Activated naive CD4-positive, alpha-beta T cell treated with anti-CD3 and anti-CD28 coated beads for 36 hours (primary cell): ENCODE measurements at regions of chr5 and their contacts with region 1.

Region 1: DNA sequence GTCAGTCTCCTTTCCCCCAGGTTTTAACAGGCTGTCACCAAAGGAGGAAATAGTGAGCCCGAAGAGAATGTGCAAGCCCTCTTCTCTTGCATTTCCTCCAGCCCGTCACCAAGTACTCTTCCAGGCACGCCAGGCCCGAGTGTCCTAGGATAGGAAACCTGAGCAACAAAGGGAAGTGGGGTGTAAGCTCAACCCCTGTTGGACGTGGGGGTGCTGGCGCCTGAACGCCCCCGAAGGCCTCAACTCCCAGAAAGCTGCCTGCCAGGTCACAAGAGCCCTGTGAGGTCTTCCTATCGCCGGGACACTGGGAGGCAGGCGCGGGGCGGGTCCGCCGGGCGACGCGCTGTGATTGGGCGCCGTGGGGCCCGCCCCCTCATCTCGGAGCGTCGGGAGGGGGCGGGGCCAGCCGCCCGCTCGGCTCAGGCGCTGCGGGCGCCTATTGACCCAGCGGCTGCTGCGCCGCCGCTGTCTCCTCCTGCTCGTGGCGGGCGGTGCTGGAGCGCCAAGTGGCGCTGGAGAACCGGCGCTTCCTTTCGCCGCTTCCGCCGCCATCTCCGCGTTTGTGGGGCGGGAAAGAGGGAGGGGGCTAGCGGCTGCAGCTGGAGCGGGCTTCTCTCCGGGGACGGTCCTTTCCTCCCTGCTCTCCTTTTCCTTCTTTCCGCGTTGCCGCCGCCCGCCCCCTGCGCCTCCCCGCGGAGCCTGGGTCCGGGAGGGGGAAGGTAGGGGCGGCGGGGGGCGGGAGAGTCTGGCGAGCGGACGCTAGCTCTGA is 572 bp upstream of the MAN2A1 start:
- DNase-seq: peak; percentile 81
- H3K4me3 Mint-ChIP-seq: peak overlapping the region; percentile 89
- H3K27ac Mint-ChIP-seq: peak overlapping the region; percentile 92
- H3K4me1 Mint-ChIP-seq: peaks cover 31% of the 10 kb centered on the region
- H3K27me3 Mint-ChIP-seq: no peaks in the 10 kb centered on the region

Region 2: DNA sequence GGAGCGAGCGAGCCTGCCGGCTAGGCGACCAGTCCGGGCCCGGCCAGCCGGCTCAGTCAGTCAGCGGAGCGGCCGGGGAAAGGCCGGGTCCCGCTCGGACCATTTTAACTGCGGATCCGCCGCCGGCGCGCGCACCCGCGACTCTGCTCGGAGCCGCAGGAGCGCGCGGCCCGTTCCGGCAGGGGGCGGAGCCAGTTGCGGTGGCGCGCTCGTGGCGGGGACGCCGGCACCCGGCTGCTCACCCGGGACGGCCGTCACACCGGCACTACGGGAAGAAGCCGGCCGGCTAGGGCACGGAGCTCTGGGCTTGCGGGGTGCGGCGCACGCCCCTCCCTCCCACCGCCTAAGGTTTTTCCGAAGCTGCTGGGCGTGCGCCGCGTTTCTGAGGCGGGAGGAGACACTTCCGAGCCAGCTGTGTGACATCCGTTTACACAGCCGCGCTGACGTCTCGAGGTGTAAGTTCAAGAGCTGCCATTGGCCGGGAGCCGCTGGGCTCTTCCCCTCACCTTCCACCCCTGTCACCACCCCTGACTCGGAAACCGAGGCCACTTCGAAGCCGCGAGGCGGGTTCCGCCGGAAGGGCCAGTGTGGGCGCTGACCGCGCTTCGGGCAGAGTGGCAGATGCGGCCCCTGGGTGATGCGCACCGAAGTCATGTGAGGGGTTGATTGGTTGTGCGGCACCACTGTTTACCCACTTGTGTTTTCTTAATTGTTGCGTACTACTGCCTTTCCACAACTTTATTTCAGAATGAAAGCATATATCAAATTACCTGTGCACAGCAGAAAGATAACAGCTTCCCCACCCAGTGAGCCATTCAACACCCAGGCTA is 1307.0 kb before region 1 on chr5 and contains the start of gene FBXL17:
- CTCF ChIA-PET with region 1: no interaction called
- intact Hi-C with region 1: loop called (anchors 2 kb)
- DNase-seq: peak; percentile 95
- H3K4me3 Mint-ChIP-seq: peak within 1 kb of the TSS; percentile 82
- H3K27ac Mint-ChIP-seq: peak within 1 kb of the TSS; percentile 95
- H3K4me1 Mint-ChIP-seq: peaks cover 36% of the 10 kb centered on the region
- H3K27me3 Mint-ChIP-seq: no peaks in the 10 kb centered on the region
- total RNA-seq, gene FBXL17: 3.5 to 4.3 TPM

Region 3: DNA sequence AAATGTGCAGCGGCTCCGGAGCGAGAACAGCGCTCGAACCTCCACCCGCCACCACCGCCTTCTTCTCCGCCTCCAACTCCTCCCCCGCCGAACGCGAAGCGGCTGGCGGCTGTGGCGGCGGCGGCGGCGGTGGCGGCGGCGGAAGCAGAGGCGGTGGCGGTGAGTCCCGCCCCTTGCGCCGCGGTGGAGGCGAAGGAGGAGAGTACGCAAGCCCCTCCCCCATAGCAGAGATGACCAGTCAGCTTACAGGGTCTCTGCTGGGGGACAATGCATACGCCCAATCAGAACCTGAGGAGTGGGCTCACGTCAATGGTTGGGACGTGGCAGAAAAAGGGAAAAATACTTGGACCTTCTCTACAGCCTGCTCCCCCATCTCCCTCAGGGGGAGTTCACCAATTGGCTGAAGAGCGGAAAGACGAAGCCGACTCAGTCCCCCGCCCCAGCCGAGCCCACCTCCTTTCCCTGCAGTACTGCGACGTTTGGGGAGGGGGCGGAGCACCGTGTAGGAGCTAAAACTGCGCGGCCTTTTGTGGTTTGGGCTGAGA is 279.2 kb before region 1 on chr5 and contains the start of gene PJA2:
- CTCF ChIA-PET with region 1: interaction called, 3 read pairs
- intact Hi-C with region 1: loop called (anchors 1 kb)
- DNase-seq: peak; percentile 99
- H3K4me3 Mint-ChIP-seq: peak within 1 kb of the TSS; percentile 97
- H3K27ac Mint-ChIP-seq: peak within 1 kb of the TSS; percentile 100
- H3K4me1 Mint-ChIP-seq: peaks cover 46% of the 10 kb centered on the region
- H3K27me3 Mint-ChIP-seq: no peaks in the 10 kb centered on the region
- total RNA-seq, gene PJA2: 53.1 to 56.9 TPM

Region 4: DNA sequence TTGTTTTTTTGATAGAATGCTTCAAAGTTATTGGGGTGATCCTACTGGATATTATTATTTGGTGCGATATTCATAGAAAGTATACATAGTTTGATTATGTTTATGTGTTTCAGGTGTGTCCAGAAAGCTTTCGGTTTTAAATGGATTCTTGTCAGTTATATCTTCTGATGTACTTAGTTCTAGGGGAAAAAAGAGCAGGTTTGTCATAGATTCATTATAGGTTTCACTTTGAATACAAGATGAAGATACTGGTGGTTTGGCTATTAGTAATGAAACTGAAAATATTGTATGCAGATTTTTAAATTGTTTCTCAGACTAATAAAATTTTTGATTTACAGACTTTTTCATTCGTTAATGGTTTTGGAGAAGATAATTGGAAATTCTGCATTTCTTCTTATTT is 99.4 kb after region 1 on chr5:
- CTCF ChIA-PET with region 1: interaction called, 3 read pairs
- intact Hi-C with region 1: loop called (anchors 2 kb)
- DNase-seq: no peak
- H3K4me3 Mint-ChIP-seq: no peak overlapping the region
- H3K27ac Mint-ChIP-seq: no peak overlapping the region
- H3K4me1 Mint-ChIP-seq: peaks cover 20% of the 10 kb centered on the region
- H3K27me3 Mint-ChIP-seq: no peaks in the 10 kb centered on the region

Region 5: DNA sequence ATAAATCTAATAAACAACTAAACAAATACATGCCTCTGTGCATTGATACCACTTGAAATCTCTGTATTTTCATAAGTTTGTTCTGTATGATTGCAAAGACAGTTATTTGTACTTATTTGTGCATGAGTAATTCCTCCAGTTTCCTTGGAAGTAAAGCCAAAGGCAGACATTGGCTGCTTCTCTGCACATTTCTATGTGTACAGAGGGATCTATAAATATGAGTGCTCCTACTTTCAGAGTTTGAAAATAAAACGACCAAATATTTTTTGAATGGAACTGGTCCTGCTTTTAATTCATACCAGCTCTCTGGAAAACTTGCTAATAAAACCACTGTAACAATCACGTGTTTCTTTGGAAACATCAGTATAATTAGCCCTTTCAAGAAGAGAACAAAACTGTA is 307.1 kb after region 1 on chr5:
- CTCF ChIA-PET with region 1: no interaction called
- intact Hi-C with region 1: loop called (anchors 1 kb)
- DNase-seq: no peak
- H3K4me3 Mint-ChIP-seq: no peak overlapping the region
- H3K27ac Mint-ChIP-seq: no peak overlapping the region
- H3K4me1 Mint-ChIP-seq: peaks cover 12% of the 10 kb centered on the region
- H3K27me3 Mint-ChIP-seq: no peaks in the 10 kb centered on the region

Region 6: GRCh38 chr5:110414360-110414759 is 725.2 kb after region 1 on chr5:
- CTCF ChIA-PET with region 1: interaction called, 3 read pairs
- intact Hi-C with region 1: loop called (anchors 1 kb)
- DNase-seq: peak; percentile 10
- H3K4me3 Mint-ChIP-seq: no peak overlapping the region
- H3K27ac Mint-ChIP-seq: no peak overlapping the region
- H3K4me1 Mint-ChIP-seq: peaks cover 11% of the 10 kb centered on the region
- H3K27me3 Mint-ChIP-seq: no peaks in the 10 kb centered on the region

Region 7: DNA sequence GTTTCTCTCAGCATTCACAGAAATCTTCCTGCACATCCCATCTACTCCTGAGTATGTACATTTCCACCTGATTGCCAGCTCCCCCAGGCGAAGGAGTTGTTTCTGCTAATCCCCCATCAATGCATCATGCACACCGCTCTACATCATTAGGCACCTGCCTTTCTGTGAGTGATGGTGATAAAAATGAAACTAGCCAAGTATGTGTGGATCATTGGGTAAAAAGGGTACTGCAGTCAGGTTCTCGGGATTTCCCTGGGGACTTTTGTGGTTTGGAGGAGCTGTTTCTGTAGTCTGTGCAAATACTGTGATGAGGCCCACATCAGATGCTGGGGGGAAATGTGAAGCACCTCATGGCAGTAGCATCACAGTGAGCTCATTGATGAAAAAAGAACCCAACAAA is 1565.5 kb after region 1 on chr5:
- CTCF ChIA-PET with region 1: no interaction called
- intact Hi-C with region 1: loop called (anchors 10 kb)
- DNase-seq: peak; percentile 95
- H3K4me3 Mint-ChIP-seq: peak overlapping the region; percentile 46
- H3K27ac Mint-ChIP-seq: peak overlapping the region; percentile 90
- H3K4me1 Mint-ChIP-seq: peaks cover 78% of the 10 kb centered on the region
- H3K27me3 Mint-ChIP-seq: no peaks in the 10 kb centered on the region